Activated B cell treated with CpG ODN at 0.5 μM for 24 hours (primary cell): ENCODE measurements at regions of chr14 and their contacts with region 1.

Region 1: DNA sequence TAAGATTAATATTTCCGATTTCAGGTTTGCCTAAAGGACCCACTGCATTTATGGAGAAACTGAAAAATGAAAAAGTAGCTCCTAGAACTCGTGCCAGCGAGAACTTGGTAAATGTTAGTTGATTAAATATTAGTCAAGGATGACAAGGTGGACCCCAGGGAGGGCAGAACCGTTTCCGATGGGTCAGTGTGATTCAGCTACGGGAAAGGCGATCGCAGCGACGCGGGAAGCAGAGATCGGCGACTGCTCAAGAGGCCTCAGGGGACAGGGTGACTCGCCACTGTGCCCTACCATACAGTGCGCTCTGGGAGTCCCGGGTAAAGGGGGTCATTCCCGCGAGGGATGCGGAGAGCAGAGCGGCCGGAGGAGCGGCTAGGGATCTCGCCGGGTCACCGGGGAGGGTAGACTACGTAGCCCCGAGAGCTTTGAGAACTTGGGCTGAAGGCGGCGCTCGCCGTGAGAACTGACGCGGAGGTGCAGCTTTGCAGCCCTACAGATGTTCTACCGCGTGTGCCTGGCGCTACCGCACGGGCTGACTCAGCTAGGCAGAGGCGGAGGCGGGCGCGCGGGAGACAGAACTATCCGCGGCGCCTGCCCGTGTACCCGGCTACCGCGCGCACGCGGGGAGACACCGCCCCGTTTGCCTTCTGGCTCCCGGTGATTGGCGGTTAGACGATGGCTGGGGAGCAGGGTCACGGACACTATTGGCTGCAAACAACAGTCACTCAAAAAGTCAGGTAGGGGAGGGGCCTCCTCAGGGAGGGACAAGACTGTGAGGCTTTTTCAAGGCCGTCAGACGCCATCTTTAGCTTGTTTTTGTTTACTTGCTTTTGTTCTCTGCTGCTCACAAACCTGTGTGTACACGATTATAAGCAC is 3.2 kb downstream of the C14orf93 start:
- DNase-seq: peak; percentile 90
- ATAC-seq: peak; percentile 92
- H3K4me3 Mint-ChIP-seq: peak overlapping the region; percentile 94
- H3K27ac Mint-ChIP-seq: peak overlapping the region; percentile 97
- H3K4me1 Mint-ChIP-seq: peaks cover 47% of the 10 kb centered on the region
- H3K27me3 Mint-ChIP-seq: no peaks in the 10 kb centered on the region
- CTCF ChIP-seq: no peak

Region 2: GRCh38 chr14:22464422-22465142 is 542.2 kb before region 1 on chr14:
- CTCF ChIA-PET with region 1: no interaction called
- POLR2A ChIA-PET with region 1: interaction called, 12 read pairs
- intact Hi-C with region 1: no loop called
- DNase-seq: no peak
- ATAC-seq: peak; percentile 47
- H3K4me3 Mint-ChIP-seq: peak overlapping the region; percentile 4
- H3K27ac Mint-ChIP-seq: peak overlapping the region; percentile 70
- H3K4me1 Mint-ChIP-seq: peaks cover 57% of the 10 kb centered on the region
- H3K27me3 Mint-ChIP-seq: no peaks in the 10 kb centered on the region
- CTCF ChIP-seq: no peak

Region 3: GRCh38 chr14:22918804-22919600 is 87.8 kb before region 1 on chr14 and contains the start of gene RBM23:
- CTCF ChIA-PET with region 1: interaction called, 3 read pairs
- POLR2A ChIA-PET with region 1: interaction called, 17 read pairs
- intact Hi-C with region 1: no loop called
- DNase-seq: peak; percentile 94
- ATAC-seq: peak; percentile 94
- H3K4me3 Mint-ChIP-seq: peak within 1 kb of the TSS; percentile 99
- H3K27ac Mint-ChIP-seq: peak within 1 kb of the TSS; percentile 100
- H3K4me1 Mint-ChIP-seq: peaks cover 53% of the 10 kb centered on the region
- H3K27me3 Mint-ChIP-seq: no peaks in the 10 kb centered on the region
- CTCF ChIP-seq: no peak
- total RNA-seq, gene RBM23: 130 and 131 TPM in 2 replicates

Region 4: DNA sequence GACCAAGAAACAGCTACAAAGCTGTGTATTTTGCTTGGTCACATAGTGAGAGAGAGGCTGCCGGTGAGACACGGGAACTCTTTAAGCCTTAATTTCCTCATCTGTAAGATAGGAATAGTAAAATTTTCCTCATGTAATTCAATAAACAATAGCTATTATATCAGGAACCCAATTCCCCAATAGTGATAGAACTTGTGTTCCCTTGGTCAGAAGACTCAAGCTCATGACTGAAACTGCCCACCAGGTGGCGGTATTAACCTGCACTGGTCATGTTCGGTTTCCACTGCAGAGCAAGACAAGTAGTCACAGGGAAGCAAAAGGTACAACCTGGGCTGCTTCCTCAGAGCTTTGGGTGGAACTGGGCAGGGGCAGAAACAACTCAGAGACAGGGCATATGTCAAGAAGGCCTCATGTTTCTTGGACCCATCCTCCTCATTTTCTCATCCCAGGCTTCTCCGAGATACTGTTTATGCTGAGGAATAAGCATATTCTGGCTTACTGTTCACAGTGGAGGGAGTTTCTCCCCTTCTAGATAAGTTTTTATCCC is 20.2 kb before region 1 on chr14:
- CTCF ChIA-PET with region 1: interaction called, 33 read pairs
- POLR2A ChIA-PET with region 1: interaction called, 22 read pairs
- intact Hi-C with region 1: loop called (anchors 2 kb)
- DNase-seq: peak; percentile 70
- ATAC-seq: peak; percentile 62
- H3K4me3 Mint-ChIP-seq: no peak overlapping the region
- H3K27ac Mint-ChIP-seq: no peak overlapping the region
- H3K4me1 Mint-ChIP-seq: no peaks in the 10 kb centered on the region
- H3K27me3 Mint-ChIP-seq: no peaks in the 10 kb centered on the region
- CTCF ChIP-seq: peak; percentile 91

Region 5: GRCh38 chr14:23041729-23042128 is 34.9 kb after region 1 on chr14:
- CTCF ChIA-PET with region 1: no interaction called
- POLR2A ChIA-PET with region 1: no interaction called
- intact Hi-C with region 1: no loop called
- DNase-seq: no peak
- ATAC-seq: no peak
- H3K4me3 Mint-ChIP-seq: no peak overlapping the region
- H3K27ac Mint-ChIP-seq: no peak overlapping the region
- H3K4me1 Mint-ChIP-seq: no peaks in the 10 kb centered on the region
- H3K27me3 Mint-ChIP-seq: peaks cover 2% of the 10 kb centered on the region
- CTCF ChIP-seq: no peak

Region 6: DNA sequence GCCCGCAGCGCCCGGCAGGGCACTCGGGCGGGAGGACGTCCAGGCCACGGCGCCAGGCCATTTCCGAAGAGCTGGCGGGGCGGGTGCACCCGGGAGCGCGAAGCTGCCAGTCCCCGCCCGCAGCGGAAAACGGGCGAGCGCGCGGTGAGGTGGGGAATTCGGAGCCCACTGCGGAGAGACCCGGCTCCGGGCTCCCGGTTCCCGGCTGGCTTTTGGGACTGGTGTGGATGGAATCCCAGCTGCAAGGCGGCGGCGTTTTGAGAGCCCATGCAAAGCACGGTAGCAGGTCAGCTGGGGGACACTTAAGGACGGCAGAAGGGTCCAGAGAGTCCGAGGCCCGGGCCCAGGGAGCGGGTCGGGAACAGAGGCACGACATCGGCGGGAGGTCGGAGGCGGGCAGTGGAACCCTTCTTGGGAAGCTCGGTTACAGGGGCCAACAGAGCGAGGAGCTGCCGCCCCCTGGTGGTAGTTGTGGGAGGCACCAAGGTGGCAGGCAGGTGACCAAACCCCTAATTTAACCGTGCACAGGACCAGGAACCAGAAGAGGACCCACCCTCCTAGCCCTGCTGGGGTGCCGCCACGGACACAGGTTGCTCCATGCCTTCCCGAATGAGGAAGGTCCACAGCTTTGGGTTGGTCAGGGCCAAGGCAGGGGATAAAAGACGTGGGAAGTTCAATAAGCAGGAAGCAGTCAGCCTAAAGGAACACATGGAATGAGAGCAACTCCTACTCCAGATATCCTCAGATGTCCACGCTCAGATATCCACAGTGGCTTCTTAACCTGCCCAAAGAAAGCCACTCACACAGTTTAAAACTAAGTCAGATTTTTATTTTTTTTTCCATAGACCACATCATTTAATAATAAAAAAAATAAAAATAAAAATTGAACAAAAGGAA is 51.2 kb after region 1 on chr14:
- CTCF ChIA-PET with region 1: interaction called, 9 read pairs
- POLR2A ChIA-PET with region 1: interaction called, 15 read pairs
- intact Hi-C with region 1: loop called (anchors 1 kb)
- DNase-seq: peak; percentile 80
- ATAC-seq: peak; percentile 73
- H3K4me3 Mint-ChIP-seq: peak overlapping the region; percentile 88
- H3K27ac Mint-ChIP-seq: no peak overlapping the region
- H3K4me1 Mint-ChIP-seq: peaks cover 18% of the 10 kb centered on the region
- H3K27me3 Mint-ChIP-seq: peaks cover 2% of the 10 kb centered on the region
- CTCF ChIP-seq: peak; percentile 58

Region 7: GRCh38 chr14:23555882-23556699 is 549.3 kb after region 1 on chr14 and contains the start of gene THTPA:
- CTCF ChIA-PET with region 1: no interaction called
- POLR2A ChIA-PET with region 1: interaction called, 5 read pairs
- intact Hi-C with region 1: loop called (anchors 2 kb)
- DNase-seq: peak; percentile 88
- ATAC-seq: peak; percentile 79
- H3K4me3 Mint-ChIP-seq: peak within 1 kb of the TSS; percentile 94
- H3K27ac Mint-ChIP-seq: peak within 1 kb of the TSS; percentile 95
- H3K4me1 Mint-ChIP-seq: peaks cover 30% of the 10 kb centered on the region
- H3K27me3 Mint-ChIP-seq: no peaks in the 10 kb centered on the region
- CTCF ChIP-seq: no peak
- total RNA-seq, gene THTPA: 18.0 and 18.6 TPM in 2 replicates